OCI-LY7 (cell line): ENCODE measurements at regions of chr2 and their contacts with region 1.

Region 1: DNA sequence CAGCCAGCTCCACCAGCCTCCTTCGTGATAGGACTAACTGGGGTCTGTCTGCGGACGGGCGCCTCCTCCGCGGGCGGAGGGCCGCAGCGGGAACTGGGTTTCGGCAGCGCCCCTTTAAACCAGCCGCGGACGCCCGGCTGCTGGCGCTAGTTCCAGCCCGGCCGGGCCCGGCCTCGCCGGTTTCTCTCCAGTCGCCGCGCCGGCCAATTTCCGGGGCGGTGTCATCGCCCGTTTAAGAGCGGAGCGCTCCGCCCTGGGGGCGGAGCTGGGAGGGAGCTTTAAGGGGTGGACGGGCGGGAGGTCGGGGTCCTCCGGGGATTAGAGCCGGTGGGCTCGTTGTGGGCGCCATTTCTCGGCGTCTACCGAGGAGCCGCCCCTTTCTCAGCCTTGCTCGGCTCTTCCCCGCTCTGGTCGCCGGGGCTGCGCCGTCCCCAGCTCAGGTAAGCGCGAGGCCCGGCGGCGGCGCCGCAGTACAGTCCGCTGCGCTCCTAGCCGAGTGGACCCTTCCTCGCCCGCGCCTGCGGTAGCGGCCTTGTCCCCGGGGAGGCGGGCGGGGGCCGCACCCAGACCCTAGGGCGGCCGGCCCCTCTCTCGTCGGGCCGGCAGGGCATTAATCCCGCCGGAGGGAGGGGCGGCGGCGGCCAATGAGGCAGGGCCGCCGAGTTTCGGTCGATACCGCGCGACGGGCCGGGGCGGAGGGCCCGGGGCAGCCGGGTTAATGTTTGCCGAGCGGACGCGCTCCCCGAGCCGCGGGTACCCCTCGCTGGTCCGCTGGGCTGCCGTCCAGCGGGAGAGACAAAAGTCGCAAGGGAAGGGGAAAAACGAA is at the start of gene EPB41L5:
- DNase-seq: peak; percentile 96
- H3K4me3 ChIP-seq: peak within 1 kb of the TSS; percentile 82
- H3K27ac ChIP-seq: peak within 1 kb of the TSS; percentile 7
- H3K4me1 ChIP-seq: peaks cover 23% of the 10 kb centered on the region
- CTCF ChIP-seq: no peak
- total RNA-seq, gene EPB41L5: 5.6 and 7.0 TPM in 2 replicates

Region 2: DNA sequence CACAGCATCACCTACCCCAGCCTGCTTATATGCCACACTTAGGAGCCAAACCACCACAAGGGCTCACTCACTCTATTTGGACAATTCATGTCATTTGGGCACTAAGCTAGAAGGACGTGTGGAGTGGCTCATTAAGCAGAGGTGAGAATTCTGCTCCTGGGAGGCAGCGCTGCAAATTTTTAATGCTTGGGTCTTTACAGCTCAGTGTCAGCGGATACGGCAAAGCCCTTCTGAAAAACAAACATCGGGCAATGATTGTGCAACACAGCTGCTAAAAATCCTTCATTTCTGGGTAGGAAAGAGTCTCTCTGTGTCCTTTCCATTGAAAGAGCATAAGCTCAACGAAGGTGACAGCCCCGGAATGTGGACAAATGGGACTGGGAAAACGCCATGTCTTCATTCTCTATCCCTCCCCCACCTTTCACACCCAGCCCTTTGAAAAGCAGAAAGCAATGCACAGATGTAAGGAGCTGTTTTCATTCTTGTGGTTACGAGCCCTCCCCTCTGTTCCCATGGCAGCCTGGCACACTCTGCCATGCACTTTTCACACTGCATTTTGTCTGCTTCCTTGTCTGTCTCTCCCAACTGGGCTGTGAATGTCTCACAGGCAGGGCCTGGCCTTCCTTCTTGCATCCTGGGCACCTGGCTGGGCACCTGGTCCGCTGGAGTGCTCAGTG is 318.0 kb before region 1 on chr2:
- CTCF ChIA-PET with region 1: no interaction called
- POLR2A ChIA-PET with region 1: no interaction called
- intact Hi-C with region 1: loop called (anchors 5 kb)
- DNase-seq: no peak
- H3K4me3 ChIP-seq: no peak overlapping the region
- H3K27ac ChIP-seq: no peak overlapping the region
- H3K4me1 ChIP-seq: peaks cover 47% of the 10 kb centered on the region
- CTCF ChIP-seq: no peak

Region 3: DNA sequence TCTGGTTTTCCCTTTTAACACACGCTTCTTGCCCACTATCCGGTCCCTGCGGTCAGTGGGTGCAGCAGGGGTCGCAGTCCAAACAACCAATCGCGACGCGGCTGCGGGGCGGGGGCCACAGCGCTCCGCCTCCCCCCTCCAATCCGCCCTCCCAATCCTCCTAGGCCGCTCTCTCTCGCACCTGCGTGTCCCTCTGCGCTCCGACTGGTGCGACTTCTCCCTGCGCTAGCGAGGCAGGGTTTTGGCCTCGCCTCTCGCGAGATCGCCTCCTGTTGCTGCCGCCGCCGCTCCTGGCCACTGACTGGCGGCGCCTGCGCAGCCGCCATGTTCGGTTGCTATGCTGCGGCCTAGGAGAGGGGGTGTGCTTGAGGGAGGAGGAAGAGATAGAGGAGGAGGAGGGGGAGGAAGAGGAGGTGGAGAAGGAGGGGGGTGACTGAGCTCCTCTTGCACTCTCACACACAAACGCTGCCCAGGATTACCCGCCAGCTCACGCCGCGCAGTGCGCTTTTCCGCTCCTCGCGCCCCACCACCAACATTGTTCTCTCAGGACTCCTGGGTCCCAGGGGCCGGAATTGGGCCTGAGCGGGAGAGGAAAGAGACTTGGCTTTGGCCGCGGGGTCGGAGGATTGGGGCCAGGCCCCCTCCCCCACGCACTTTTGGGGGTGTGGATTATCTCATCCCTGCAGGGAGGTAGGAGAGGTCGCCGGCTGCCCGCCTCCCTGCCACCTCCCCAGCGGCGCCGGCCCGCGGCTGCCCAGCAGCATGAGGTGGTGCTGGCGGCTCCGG is 253.3 kb before region 1 on chr2 and contains the start of gene PTPN4:
- CTCF ChIA-PET with region 1: no interaction called
- POLR2A ChIA-PET with region 1: no interaction called
- intact Hi-C with region 1: loop called (anchors 2 kb)
- DNase-seq: peak; percentile 99
- H3K4me3 ChIP-seq: peak within 1 kb of the TSS; percentile 95
- H3K27ac ChIP-seq: peak within 1 kb of the TSS; percentile 84
- H3K4me1 ChIP-seq: peaks cover 19% of the 10 kb centered on the region
- CTCF ChIP-seq: no peak
- total RNA-seq, gene PTPN4: 29.8 and 50.6 TPM in 2 replicates

Region 4: GRCh38 chr2:120064664-120065063 is 51.7 kb after region 1 on chr2:
- CTCF ChIA-PET with region 1: no interaction called
- POLR2A ChIA-PET with region 1: no interaction called
- intact Hi-C with region 1: no loop called
- DNase-seq: no peak
- H3K4me3 ChIP-seq: no peak overlapping the region
- H3K27ac ChIP-seq: no peak overlapping the region
- H3K4me1 ChIP-seq: no peaks in the 10 kb centered on the region
- CTCF ChIP-seq: no peak

Region 5: DNA sequence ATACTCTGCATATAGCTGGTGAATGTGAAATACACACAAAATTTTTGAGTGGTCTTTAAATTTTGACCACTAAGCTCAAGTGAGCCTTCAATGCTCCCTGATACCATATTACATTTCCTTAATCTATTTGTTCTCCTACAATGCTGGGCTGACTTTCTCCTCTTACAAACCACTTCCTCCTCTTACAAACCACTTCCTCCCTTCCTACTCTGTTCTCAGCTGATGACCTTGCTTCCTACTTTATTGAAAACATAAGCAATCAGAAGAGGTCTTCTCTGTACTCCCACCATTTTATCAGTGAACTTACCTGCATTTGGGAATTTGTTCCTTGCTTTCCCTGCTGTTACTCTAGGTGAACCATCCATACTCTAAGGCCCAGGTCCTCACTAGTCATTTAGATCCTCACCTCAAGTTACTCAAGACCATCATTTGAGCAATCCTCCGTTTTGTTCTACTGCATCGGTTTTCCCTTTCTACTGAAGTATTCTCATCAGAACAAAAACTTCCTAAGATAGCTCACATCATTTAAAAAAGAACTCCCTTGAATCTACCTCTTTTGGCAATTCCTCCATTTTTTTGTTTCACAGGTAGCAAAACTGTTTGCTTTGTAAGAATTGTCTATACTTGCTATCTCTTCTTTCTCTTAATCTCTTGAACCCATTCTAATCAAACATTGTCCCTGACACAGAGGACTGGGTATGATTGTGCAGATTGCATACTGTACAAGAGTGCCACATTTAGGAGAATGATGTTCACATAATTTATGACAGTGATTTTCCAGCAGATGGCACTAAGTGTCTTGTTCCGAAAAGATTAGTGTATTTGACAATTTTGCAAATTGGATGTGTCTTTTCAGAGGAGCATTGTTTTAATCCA is 96.4 kb after region 1 on chr2:
- CTCF ChIA-PET with region 1: no interaction called
- POLR2A ChIA-PET with region 1: no interaction called
- intact Hi-C with region 1: loop called (anchors 2 kb)
- DNase-seq: peak; percentile 68
- H3K4me3 ChIP-seq: peak overlapping the region; percentile 17
- H3K27ac ChIP-seq: no peak overlapping the region
- H3K4me1 ChIP-seq: peaks cover 17% of the 10 kb centered on the region
- CTCF ChIP-seq: peak; percentile 86

Region 6: DNA sequence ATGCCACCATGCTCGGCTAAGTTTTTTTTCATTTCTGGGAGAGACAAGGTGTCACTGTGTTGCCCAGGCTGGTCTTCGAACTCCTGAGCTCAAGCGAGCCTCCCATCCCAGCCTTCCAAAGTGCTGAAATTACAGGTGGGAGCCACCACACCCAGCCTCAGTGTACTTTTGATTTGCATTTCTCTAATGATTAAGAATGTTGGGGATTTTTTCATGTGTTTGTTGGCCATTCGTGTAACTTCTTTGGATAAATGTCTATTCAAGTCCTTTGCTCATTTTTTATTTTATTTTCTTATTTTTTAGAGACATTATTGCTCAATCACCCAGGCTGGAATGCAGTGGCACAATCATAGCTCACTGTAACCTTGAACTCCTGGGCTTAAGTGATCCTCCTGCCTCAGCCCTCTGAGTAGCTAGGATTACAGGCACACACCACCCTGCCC is 137.1 kb after region 1 on chr2:
- CTCF ChIA-PET with region 1: no interaction called
- POLR2A ChIA-PET with region 1: no interaction called
- intact Hi-C with region 1: no loop called
- DNase-seq: no peak
- H3K4me3 ChIP-seq: no peak overlapping the region
- H3K27ac ChIP-seq: no peak overlapping the region
- H3K4me1 ChIP-seq: no peaks in the 10 kb centered on the region
- CTCF ChIP-seq: no peak

Region 7: GRCh38 chr2:120223034-120223912 is 210.3 kb after region 1 on chr2 and contains the start of gene TMEM185B:
- CTCF ChIA-PET with region 1: no interaction called
- POLR2A ChIA-PET with region 1: no interaction called
- intact Hi-C with region 1: loop called (anchors 1 kb)
- DNase-seq: peak; percentile 90
- H3K4me3 ChIP-seq: peak within 1 kb of the TSS; percentile 76
- H3K27ac ChIP-seq: peak within 1 kb of the TSS; percentile 78
- H3K4me1 ChIP-seq: peaks cover 55% of the 10 kb centered on the region
- CTCF ChIP-seq: peak; percentile 40; the same call in 1 of the 2 replicates
- total RNA-seq, gene TMEM185B: 28.7 and 30.2 TPM in 2 replicates